ENCODE measurements at regions of chr17 and their contacts with region 1.

Region 1: GRCh38 chr17:49496183-49496866 is 1.2 kb downstream of the NGFR start:
- DNase-seq: peak; percentile 84
- ATAC-seq: peak; percentile 83
- H3K4me3 Mint-ChIP-seq: peak overlapping the region; percentile 60
- H3K27ac Mint-ChIP-seq: no peak overlapping the region
- H3K4me1 Mint-ChIP-seq: peaks cover 28% of the 10 kb centered on the region
- H3K27me3 Mint-ChIP-seq: peaks cover 73% of the 10 kb centered on the region

Region 2: GRCh38 chr17:49450735-49451134 is 45.6 kb before region 1 on chr17:
- CTCF ChIA-PET with region 1: no interaction called
- POLR2A ChIA-PET with region 1: no interaction called
- DNase-seq: peak; percentile 24
- ATAC-seq: peak; percentile 49
- H3K4me3 Mint-ChIP-seq: no peak overlapping the region
- H3K27ac Mint-ChIP-seq: peak overlapping the region; percentile 31
- H3K4me1 Mint-ChIP-seq: peaks cover 16% of the 10 kb centered on the region
- H3K27me3 Mint-ChIP-seq: peaks cover 9% of the 10 kb centered on the region

Region 3: DNA sequence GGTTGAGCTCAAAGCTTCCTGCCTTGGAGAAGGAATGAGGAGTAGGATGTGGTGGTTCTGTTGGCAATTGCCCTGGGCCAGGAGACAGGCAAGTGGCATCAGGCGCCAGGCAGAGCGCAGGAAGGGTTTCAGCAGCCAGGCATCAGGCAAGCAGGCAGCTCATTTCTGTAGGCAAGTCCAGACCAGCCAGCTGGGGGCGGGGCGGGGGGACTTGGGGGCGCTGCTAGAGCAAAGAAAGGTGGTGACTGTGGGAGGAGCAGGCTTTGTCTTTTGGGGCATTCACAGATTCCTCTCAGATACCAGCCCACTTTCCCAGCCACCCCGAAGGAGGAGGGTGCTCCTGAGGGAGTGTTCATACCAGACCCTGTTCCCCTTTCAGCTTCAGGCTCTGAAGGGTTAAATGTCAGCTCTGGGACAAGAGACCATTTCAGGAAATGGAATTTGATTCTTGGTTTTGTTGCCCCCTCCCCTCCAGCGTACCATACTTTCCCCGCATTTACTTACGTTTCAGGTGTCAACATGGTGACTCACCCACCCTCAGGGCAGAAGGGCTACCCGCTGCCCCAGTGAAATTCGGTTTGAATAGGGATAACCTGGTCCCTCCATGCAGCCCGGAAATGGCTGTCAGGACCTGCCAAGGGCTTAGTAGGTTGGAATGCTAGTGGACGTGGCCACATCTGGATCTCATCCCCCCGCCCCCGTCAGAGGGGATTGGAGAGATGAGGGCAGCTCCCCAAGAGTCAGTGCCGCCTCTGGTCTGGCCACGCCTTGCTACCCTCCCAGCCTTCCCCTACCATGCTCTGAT is 11.9 kb after region 1 on chr17:
- CTCF ChIA-PET with region 1: interaction called, 12 read pairs
- POLR2A ChIA-PET with region 1: no interaction called
- DNase-seq: no peak
- ATAC-seq: no peak
- H3K4me3 Mint-ChIP-seq: no peak overlapping the region
- H3K27ac Mint-ChIP-seq: no peak overlapping the region
- H3K4me1 Mint-ChIP-seq: no peaks in the 10 kb centered on the region
- H3K27me3 Mint-ChIP-seq: peaks cover 25% of the 10 kb centered on the region

Region 4: GRCh38 chr17:49926886-49927285 is 430.6 kb after region 1 on chr17:
- CTCF ChIA-PET with region 1: no interaction called
- POLR2A ChIA-PET with region 1: no interaction called
- DNase-seq: no peak
- ATAC-seq: no peak
- H3K4me3 Mint-ChIP-seq: no peak overlapping the region
- H3K27ac Mint-ChIP-seq: no peak overlapping the region
- H3K4me1 Mint-ChIP-seq: no peaks in the 10 kb centered on the region
- H3K27me3 Mint-ChIP-seq: peaks cover 9% of the 10 kb centered on the region